RWPE1 (cell line): ENCODE measurements at regions of chr2 and their contacts with region 1.

Region 1: DNA sequence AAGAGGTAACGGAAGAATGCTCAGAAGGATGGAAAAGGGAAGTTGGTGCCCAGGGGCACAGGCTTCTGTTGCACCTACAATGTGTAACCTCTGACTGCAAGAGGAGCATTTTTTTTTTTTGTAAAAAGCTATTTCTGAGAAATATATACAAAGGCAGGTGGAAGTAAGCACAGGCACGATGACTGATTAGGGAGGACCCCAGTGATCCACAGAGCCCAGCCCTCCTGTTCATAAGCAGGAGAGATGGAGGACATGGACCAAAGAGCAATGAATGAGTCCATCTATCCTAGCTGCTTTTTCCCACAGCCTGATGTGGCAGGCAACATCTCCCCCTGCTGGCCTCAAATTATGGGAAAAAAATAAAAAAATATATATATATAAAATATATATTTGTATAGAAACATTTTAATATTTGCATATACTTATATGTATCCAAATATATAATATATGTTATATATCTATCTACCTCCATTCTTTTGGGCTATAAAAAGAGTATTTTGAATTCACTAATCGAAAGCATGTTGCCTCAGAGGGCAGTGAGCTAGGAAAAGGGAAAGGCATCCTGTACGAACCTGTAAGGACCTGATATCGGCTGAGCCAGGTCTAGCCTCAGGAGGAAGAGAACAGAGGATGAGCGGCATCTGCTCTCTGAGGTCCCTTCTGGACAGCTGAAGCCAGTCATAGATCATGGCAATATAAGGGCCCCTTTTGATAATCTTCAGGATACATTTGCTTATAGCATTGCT is 166.0 kb upstream of the STK17B start:
- DNase-seq: peak; percentile 44
- H3K27ac ChIP-seq: no peak overlapping the region
- CTCF ChIP-seq: no peak

Region 2: DNA sequence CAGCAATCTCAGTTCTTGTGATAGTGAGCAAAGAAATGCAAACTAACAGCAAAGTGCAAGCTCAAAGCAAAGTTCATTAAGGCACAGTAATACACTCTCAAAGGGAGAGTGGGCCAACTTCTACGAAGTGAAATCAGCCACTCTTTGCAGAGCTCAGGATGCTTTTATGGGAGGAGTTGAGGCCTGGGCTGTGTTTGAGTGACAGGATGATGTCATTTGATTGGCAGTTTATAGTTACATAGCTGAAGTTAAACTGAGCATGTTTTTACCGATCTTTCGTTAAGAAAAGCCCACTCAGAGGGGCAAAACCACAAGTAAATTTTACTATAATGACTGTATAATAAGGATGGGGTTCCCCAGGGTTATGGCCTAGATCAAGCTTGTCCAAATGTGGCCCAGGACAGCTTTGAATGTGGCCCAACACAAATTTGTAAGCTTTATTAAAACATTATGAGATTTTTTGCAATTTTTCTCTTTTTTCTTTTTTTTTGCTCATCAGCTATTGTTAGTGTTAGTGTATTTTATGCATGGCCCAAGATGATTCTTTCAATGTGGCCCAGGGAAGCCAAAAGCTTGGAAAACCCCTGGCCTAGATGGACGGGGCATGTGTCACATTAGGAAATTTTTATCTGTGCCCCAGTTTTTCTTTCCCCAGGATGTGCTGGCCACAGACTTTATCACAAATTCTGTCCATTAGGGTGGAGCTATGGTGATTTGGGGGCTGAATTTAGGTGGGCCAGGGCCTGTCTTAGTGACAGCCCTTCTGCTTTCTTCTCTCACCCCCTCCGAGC is 260.4 kb before region 1 on chr2:
- CTCF ChIA-PET with region 1: interaction called, 34 read pairs
- POLR2A ChIA-PET with region 1: no interaction called
- DNase-seq: no peak
- H3K27ac ChIP-seq: no peak overlapping the region
- CTCF ChIP-seq: no peak

Region 3: DNA sequence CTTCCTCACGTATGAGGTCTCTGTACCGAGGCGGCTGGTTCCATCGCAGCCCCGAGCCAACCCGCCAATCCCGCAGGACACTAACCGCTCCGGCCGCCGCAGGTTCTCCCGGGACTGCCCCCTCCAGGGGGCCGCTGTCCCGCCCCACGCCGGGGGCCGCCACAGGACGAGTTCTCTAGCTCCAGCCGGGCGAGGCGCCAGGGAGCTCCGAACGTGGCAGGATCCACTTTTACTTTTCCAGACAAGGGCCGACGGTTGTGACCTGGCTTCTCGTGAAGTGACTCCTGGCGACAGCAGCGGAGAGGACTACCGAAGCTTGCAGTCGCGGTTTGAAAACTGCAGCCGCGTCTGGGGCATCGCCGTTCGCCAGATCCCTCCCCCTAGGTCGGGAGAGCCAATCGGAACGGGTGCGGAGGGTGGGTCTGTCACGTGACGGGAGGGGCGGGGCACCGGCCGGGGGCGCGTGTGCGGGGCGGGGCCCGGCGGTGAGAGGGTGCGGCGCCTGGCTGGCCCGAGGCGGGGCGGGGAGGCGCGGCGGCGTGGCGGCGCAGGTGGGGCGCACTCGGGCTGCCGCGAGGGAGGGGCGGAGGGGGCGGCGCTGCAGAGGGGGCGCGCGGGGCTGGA is 166.0 kb before region 1 on chr2 and contains the start of gene STK17B:
- CTCF ChIA-PET with region 1: no interaction called
- POLR2A ChIA-PET with region 1: no interaction called
- DNase-seq: peak; percentile 97
- H3K27ac ChIP-seq: peak within 1 kb of the TSS; percentile 94
- CTCF ChIP-seq: no peak

Region 4: DNA sequence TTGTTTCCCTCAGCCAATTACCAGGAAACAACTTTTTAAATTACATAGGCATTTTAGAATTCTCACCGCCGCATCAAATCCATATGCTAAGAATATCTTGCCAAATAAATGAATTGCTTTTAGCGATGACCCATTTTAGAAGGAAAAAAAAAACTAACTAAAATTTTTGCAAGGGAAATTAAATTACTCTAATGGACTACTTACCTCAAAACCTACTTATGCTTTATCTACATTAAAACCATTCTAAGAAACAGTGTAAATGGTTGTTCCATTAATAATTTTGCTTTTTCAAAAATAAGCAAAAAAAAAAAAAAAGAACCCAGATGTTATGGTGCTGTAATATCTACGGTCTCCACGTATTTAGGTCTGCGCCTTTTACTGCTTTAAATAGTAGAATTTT is 228.6 kb after region 1 on chr2:
- CTCF ChIA-PET with region 1: interaction called, 12 read pairs
- POLR2A ChIA-PET with region 1: no interaction called
- DNase-seq: no peak
- H3K27ac ChIP-seq: no peak overlapping the region
- CTCF ChIP-seq: no peak